ENCODE measurements at regions of chr6 and their contacts with region 1.

Region 1: DNA sequence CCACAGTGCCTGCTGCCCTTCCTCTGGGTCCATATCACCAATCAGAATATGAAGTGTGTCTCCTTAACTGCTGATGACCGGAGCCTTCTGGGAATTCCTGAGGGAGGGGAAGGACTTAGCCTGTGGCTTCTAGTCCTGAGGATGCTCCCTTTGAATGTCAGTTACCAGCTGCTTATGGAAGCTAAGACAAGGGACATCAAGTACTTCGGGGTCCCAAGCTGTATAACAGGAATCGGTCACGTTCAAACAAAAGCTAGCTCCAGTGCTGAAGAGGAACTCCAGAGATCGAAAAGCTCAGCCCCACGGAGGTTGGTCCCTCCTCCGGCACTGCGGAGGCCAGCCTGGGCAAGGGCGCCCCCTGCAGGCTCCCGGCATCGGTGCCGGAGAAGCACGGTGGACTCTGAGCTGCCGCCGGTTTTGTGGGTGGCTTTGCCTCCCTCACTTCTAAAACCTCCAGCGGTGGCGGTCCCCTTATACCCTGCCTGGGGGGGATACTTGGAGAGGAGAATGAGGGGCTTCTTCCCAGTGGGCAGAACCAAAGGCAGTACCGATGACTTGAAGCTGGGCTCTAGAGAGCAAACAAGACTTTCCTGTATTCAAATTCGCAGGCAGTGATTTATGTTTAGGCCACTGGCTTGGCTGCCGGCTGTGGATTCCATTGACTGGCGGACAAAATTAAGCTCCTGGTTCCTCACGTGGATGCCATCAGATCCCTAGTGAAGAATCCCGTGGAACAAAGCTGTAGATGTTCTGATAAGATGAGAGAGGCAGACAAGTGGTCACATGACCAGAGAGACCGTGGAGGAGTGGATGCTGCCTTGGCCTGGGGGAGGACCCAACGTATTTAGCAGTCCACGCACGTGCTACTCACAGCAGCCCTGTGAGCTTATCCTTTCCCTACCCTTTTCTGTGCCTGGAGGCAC is 16.2 kb upstream of the UBR2 start:
- DNase-seq: peak; percentile 45
- H3K4me3 ChIP-seq: peak overlapping the region; percentile 53
- H3K27ac ChIP-seq: no peak overlapping the region
- H3K27me3 ChIP-seq: no peaks in the 10 kb centered on the region
- CTCF ChIP-seq: peak; percentile 100

Region 2: DNA sequence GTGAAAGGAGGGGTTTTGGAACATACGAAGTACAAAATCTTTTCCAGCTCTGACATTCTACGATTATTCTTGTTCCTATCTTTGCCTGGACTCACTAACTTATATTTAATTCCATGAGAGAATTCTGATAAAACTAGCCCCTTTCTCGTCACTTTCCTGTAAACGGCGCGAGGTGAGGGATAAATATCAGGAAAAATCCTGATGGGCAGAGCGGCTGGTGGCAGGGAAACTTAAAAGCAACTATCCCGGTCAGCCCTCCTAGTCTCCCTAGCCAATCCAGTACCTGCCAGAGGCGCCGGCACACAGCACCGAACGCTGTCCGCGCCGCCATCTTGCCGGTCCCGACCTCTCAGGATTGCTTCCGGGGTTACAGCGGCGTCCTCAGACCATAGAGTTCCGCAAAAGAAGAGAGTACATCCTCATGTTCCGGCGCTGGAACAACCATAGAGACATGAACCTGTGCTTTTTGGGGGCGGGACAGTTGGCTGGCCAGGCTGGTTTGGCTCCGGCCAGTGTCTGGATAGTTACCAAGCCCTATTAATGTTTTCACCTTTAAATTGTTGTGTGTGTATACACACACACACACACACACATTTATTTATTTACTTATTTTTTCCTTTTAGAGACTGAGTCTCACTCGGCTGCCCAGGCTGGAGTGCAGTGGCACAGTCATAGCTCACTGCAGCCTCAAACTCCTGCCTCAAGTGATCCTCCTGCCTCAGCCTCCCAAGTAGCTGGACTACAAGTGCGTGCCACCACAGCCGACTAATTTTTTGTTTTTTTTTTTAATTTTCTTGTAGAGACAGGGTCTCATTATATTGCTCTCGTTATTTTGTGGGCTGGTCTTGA is 329.9 kb before region 1 on chr6 and contains the start of gene MRPS10:
- CTCF ChIA-PET with region 1: interaction called, 99 read pairs
- POLR2A ChIA-PET with region 1: no interaction called
- DNase-seq: peak; percentile 83
- H3K4me3 ChIP-seq: peak within 1 kb of the TSS; percentile 95
- H3K27ac ChIP-seq: peak within 1 kb of the TSS; percentile 86
- H3K27me3 ChIP-seq: no peaks in the 10 kb centered on the region
- CTCF ChIP-seq: no peak
- polyA plus RNA-seq, gene MRPS10: 45.4 and 63.2 TPM in 2 replicates

Region 3: GRCh38 chr6:42271834-42272805 is 275.5 kb before region 1 on chr6:
- CTCF ChIA-PET with region 1: interaction called, 23 read pairs
- POLR2A ChIA-PET with region 1: no interaction called
- DNase-seq: no peak
- H3K4me3 ChIP-seq: no peak overlapping the region
- H3K27ac ChIP-seq: peak overlapping the region; percentile 66
- H3K27me3 ChIP-seq: no peaks in the 10 kb centered on the region
- CTCF ChIP-seq: no peak

Region 4: DNA sequence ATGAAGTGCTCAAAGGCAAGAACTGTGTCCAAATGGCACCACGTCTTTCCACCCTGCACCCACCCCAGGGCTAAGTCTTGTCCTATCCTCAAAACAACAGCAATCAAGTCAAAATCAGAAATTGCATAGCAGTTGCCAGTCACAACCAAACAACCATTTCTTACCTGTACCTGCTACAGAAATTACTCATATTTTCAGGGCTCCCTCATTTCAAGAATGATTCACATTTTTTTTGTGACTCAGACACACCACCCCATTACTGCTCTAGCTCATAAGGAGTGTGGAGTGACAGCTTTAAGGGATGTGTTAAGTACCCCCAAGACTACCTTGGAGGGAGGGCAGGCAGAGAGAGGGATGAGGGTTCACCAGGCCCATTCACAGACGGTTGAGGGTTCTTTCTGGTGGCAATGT is 207.7 kb before region 1 on chr6:
- CTCF ChIA-PET with region 1: interaction called, 15 read pairs
- POLR2A ChIA-PET with region 1: interaction called, 4 read pairs
- DNase-seq: no peak
- H3K4me3 ChIP-seq: no peak overlapping the region
- H3K27ac ChIP-seq: peak overlapping the region; percentile 89
- H3K27me3 ChIP-seq: no peaks in the 10 kb centered on the region
- CTCF ChIP-seq: no peak

Region 5: GRCh38 chr6:42417641-42418112 is 130.0 kb before region 1 on chr6:
- CTCF ChIA-PET with region 1: interaction called, 10 read pairs
- POLR2A ChIA-PET with region 1: no interaction called
- DNase-seq: no peak
- H3K4me3 ChIP-seq: no peak overlapping the region
- H3K27ac ChIP-seq: no peak overlapping the region
- H3K27me3 ChIP-seq: no peaks in the 10 kb centered on the region
- CTCF ChIP-seq: no peak

Region 6: GRCh38 chr6:42482174-42482573 is 65.5 kb before region 1 on chr6:
- CTCF ChIA-PET with region 1: interaction called, 11 read pairs
- POLR2A ChIA-PET with region 1: no interaction called
- DNase-seq: no peak
- H3K4me3 ChIP-seq: no peak overlapping the region
- H3K27ac ChIP-seq: no peak overlapping the region
- H3K27me3 ChIP-seq: no peaks in the 10 kb centered on the region
- CTCF ChIP-seq: no peak

Region 7: GRCh38 chr6:42537536-42537935 is 10.1 kb before region 1 on chr6:
- CTCF ChIA-PET with region 1: interaction called, 97 read pairs
- POLR2A ChIA-PET with region 1: no interaction called
- DNase-seq: no peak
- H3K4me3 ChIP-seq: no peak overlapping the region
- H3K27ac ChIP-seq: no peak overlapping the region
- H3K27me3 ChIP-seq: no peaks in the 10 kb centered on the region
- CTCF ChIP-seq: no peak

Region 8: DNA sequence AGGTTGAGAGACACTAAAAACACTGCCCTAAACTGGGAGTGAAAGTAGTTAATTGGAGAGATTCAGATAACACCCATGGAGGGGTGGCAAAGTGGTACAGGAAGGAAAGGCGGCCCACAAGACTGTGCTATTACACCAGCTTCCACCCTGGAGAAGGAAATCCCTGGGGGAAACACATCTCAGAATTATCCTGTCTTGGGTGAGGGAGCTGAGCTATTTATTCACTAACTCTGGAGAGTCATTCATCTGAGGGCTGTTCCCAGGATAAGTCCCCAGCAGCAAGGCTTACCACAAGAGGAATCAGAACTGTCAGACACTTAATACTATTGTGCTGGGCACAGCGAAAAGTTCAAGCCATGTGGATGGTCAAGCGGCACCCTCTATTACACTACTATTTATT is 188.3 kb after region 1 on chr6:
- CTCF ChIA-PET with region 1: no interaction called
- POLR2A ChIA-PET with region 1: no interaction called
- DNase-seq: no peak
- H3K4me3 ChIP-seq: no peak overlapping the region
- H3K27ac ChIP-seq: no peak overlapping the region
- H3K27me3 ChIP-seq: peaks cover 4% of the 10 kb centered on the region
- CTCF ChIP-seq: no peak